Mammary epithelial cell (primary cell): ENCODE measurements at regions of chr1 and their contacts with region 1.

Region 1: DNA sequence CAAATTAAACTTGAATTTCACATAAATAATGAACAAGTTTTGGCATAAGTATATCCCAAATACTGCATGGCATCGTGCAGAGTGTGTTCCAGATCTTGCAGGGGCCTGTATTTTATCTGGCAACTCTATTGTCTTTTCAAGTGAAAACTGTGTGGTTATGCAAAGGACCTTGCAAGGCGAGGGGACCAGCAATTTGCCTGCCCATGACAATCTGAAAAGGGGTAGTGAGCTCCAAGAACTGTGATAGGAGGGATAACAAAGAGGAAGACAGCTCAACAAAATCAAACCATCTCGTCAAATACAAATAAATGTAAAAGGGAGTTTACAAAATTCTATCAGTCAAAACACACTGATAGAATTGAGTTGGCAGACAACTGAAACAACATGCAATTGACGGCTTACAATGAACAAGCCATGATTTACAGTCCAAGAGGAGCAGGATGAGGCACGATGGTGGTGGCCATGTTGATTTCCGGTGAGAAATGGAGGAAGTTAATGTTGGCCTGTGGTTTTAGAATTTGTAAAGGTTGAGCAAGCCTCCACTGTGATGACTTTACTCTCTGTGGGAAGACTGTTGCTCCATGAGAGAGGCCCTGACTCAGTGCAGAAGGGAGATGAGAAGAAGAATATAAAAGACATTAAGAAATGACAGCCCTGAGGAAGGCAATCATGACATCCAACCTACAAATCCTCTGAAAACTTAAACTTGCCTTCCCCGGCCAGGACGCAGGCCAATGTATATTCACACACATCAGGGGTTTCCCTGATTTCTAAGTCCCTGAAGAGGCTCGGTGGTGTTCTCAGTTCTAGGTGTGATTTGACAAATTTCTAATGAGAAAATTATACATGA is 132.2 kb downstream of the ADSS2 start:
- DNase-seq: peak; percentile 87
- H3K4me3 ChIP-seq: no peak overlapping the region
- H3K27ac ChIP-seq: no peak overlapping the region
- H3K4me1 ChIP-seq: peaks cover 27% of the 10 kb centered on the region
- H3K27me3 ChIP-seq: no peaks in the 10 kb centered on the region
- CTCF ChIP-seq: no peak

Region 2: DNA sequence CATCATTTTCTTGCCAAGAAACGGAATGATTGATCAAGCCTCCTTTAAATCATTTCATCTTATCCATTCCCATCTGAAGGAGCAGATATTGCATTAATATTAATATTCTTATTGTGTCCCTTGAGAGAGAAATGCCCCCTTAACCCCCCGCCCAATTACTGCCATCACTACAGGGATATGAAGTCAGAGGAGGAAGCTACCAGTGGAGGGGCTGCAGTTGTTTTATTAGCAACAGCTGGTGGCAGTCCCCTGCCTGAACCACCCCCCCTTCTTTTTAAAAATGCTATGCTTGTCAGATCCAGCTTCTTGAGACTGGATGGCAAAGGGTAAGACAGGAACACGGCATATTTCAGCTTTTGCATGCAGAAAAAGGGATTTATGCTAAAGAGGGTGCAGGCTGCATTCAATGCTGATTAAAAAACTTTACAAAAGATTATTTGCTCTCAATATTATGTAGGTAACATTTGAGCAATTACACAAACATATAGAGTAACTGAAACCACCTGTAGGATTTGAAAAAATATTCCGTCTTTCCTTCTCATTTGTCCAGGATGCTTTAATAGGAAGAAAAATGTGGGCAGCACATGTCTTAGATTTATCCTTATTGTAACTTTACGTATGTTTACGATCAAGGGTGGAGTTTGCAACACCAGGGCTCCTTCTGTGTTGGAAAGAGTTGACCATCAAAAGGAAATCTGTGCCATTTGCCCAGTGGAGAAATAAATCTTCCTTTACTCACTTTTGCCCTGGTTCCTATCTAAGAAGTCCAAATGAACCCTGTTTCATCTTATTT is 190.7 kb before region 1 on chr1:
- CTCF ChIA-PET with region 1: no interaction called
- dilution Hi-C with region 1: no loop called
- in situ Hi-C with region 1: no loop called
- intact Hi-C with region 1: no loop called
- DNase-seq: no peak
- H3K4me3 ChIP-seq: no peak overlapping the region
- H3K27ac ChIP-seq: no peak overlapping the region
- H3K4me1 ChIP-seq: no peaks in the 10 kb centered on the region
- H3K27me3 ChIP-seq: peaks cover 6% of the 10 kb centered on the region
- CTCF ChIP-seq: no peak

Region 3: GRCh38 chr1:244353551-244354091 is 34.1 kb after region 1 on chr1:
- CTCF ChIA-PET with region 1: no interaction called
- dilution Hi-C with region 1: no loop called
- in situ Hi-C with region 1: no loop called
- intact Hi-C with region 1: loop called (anchors 2 kb)
- DNase-seq: peak; percentile 92
- H3K4me3 ChIP-seq: no peak overlapping the region
- H3K27ac ChIP-seq: peak overlapping the region; percentile 45
- H3K4me1 ChIP-seq: peaks cover 22% of the 10 kb centered on the region
- H3K27me3 ChIP-seq: no peaks in the 10 kb centered on the region
- CTCF ChIP-seq: no peak

Region 4: DNA sequence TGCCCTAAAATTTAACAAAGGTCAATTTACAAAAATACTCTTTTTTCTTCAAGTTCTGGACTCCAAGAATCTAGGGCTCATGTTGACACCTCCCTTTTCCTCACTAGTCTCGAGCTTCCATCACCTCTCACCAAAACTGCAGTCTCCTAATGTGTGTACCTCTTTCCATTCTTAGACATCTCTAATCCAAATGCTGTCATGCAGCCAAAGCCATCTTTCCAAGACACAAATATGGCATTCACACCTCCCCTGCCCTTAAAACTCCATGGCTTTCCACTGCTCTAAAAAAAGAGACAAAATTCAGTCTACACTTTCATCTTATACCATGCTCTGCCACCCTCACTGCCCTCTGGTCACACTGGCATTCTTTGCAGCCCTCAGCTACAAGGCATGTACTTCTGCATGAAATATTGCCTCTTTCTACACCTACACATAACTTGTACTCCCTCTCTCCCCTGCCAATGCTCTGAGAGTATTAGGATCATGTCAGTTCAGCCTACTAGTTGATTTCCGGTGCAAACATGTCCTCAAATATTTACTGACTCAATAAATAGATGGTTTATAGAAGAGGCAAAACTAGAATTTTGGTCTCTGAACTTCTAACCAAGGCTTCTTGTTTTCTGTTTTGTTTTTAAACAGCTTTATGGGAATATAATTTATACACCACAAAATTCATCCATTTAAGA is 105.3 kb after region 1 on chr1:
- CTCF ChIA-PET with region 1: no interaction called
- dilution Hi-C with region 1: no loop called
- in situ Hi-C with region 1: no loop called
- intact Hi-C with region 1: no loop called
- DNase-seq: no peak
- H3K4me3 ChIP-seq: no peak overlapping the region
- H3K27ac ChIP-seq: no peak overlapping the region
- H3K4me1 ChIP-seq: no peaks in the 10 kb centered on the region
- H3K27me3 ChIP-seq: no peaks in the 10 kb centered on the region
- CTCF ChIP-seq: no peak

Region 5: GRCh38 chr1:244451951-244452795 is 132.7 kb after region 1 on chr1:
- CTCF ChIA-PET with region 1: no interaction called
- dilution Hi-C with region 1: no loop called
- in situ Hi-C with region 1: no loop called
- intact Hi-C with region 1: no loop called
- DNase-seq: peak; percentile 99
- H3K4me3 ChIP-seq: peak overlapping the region; percentile 49 to 97 (median 50)
- H3K27ac ChIP-seq: peak overlapping the region; percentile 31
- H3K4me1 ChIP-seq: peaks cover 15% of the 10 kb centered on the region
- H3K27me3 ChIP-seq: no peaks in the 10 kb centered on the region
- CTCF ChIP-seq: peak; percentile 32 to 34